ENCODE measurements at regions of chr6 and their contacts with region 1.

Region 1: GRCh38 chr6:21593412-21593926 is at the start of gene SOX4:
- DNase-seq: peak; percentile 98
- ATAC-seq: peak; percentile 65
- H3K4me3 ChIP-seq: peak within 1 kb of the TSS; percentile 99
- H3K27ac ChIP-seq: peak within 1 kb of the TSS; percentile 69
- H3K4me1 ChIP-seq: peaks cover 26% of the 10 kb centered on the region
- H3K27me3 ChIP-seq: no peaks in the 10 kb centered on the region
- CTCF ChIP-seq: no peak
- total RNA-seq, gene SOX4: 46.1 and 62.8 TPM in 2 replicates

Region 2: GRCh38 chr6:20877008-20877937 is 716.2 kb before region 1 on chr6:
- CTCF ChIA-PET with region 1: interaction called, 7 read pairs
- POLR2A ChIA-PET with region 1: interaction called, 4 read pairs
- intact Hi-C with region 1: loop called (anchors 1 kb)
- DNase-seq: peak; percentile 98
- ATAC-seq: peak; percentile 96
- H3K4me3 ChIP-seq: peak overlapping the region; percentile 8; the same call in 1 of the 2 replicates
- H3K27ac ChIP-seq: peak overlapping the region; percentile 88
- H3K4me1 ChIP-seq: peaks cover 45% of the 10 kb centered on the region
- H3K27me3 ChIP-seq: no peaks in the 10 kb centered on the region
- CTCF ChIP-seq: no peak

Region 3: DNA sequence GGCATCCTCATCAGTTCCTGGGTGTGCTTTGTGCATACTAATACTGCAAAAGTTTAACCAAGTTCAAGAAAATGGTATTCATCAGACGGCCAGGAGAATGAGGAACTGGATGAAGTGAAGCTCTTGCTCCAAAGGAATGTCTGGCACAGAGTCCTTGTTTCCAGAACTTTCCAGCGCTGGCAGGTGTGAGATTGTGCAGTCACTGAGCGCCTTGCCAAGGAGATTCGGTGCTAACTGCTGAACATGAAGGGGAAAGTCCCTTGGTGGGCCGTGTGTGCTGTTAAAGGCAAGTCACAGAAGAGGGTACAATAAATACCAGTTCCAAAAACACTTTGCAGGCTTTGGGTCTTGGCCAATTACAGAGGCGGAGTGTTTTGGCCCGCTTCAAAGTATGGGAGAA is 262.2 kb before region 1 on chr6:
- CTCF ChIA-PET with region 1: interaction called, 5 read pairs
- POLR2A ChIA-PET with region 1: interaction called, 3 read pairs
- intact Hi-C with region 1: loop called (anchors 5 kb)
- DNase-seq: no peak
- ATAC-seq: no peak
- H3K4me3 ChIP-seq: no peak overlapping the region
- H3K27ac ChIP-seq: no peak overlapping the region
- H3K4me1 ChIP-seq: peaks cover 5% of the 10 kb centered on the region; the same call in 1 of the 2 replicates
- H3K27me3 ChIP-seq: no peaks in the 10 kb centered on the region
- CTCF ChIP-seq: no peak

Region 4: DNA sequence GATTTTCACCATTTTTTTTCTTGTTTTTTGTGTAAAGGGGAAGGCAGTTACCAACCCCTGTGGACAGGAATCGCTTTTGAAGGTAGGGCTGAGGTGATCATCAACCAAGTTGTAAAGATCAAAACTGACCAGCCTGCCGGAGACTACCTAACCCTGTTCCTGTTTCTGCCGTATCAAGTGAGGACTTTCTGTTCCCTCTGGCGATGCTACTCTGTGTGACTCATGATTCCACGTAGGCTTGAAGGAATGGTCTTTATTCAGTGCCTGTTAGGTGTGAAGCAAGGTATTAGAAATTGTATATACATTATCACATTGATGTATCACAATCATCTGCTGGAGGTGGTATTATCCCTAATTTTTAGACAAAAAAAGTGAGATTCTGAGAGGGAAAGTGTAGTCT is 161.4 kb after region 1 on chr6:
- CTCF ChIA-PET with region 1: interaction called, 4 read pairs
- POLR2A ChIA-PET with region 1: interaction called, 17 read pairs
- intact Hi-C with region 1: no loop called
- DNase-seq: peak; percentile 89
- ATAC-seq: peak; percentile 68
- H3K4me3 ChIP-seq: no peak overlapping the region
- H3K27ac ChIP-seq: peak overlapping the region; percentile 40
- H3K4me1 ChIP-seq: peaks cover 44% of the 10 kb centered on the region
- H3K27me3 ChIP-seq: no peaks in the 10 kb centered on the region
- CTCF ChIP-seq: no peak

Region 5: GRCh38 chr6:22113026-22113766 is 519.7 kb after region 1 on chr6:
- CTCF ChIA-PET with region 1: no interaction called
- POLR2A ChIA-PET with region 1: interaction called, 23 read pairs
- intact Hi-C with region 1: loop called (anchors 5 kb)
- DNase-seq: peak; percentile 98
- ATAC-seq: peak; percentile 98
- H3K4me3 ChIP-seq: no peak overlapping the region
- H3K27ac ChIP-seq: peak overlapping the region; percentile 99
- H3K4me1 ChIP-seq: peaks cover 20% of the 10 kb centered on the region
- H3K27me3 ChIP-seq: no peaks in the 10 kb centered on the region
- CTCF ChIP-seq: no peak

Region 6: DNA sequence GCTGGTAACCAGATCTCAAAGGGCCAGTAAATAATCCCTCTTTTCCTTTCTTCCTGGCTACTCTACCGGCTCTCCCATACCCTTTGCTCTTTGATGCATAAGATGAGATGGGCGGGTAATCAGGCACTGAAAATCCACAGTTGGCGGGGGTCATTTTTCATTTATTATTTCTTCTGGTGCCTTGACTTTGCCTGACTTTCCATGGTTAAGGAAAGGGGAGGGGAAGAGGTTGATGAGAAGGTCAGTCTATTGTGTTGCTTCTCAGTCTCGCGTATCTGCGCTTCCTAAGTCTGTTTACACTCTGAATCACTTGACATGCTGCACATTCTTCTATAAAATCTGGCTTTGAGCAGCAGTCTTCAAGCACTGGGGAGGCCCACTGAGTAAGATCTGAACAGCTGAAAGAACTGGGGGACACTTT is 854.8 kb after region 1 on chr6:
- CTCF ChIA-PET with region 1: no interaction called
- POLR2A ChIA-PET with region 1: no interaction called
- intact Hi-C with region 1: loop called (anchors 10 kb)
- DNase-seq: peak; percentile 86
- ATAC-seq: peak; percentile 87
- H3K4me3 ChIP-seq: no peak overlapping the region
- H3K27ac ChIP-seq: peak overlapping the region; percentile 44
- H3K4me1 ChIP-seq: peaks cover 49% of the 10 kb centered on the region
- H3K27me3 ChIP-seq: no peaks in the 10 kb centered on the region
- CTCF ChIP-seq: no peak

Region 7: DNA sequence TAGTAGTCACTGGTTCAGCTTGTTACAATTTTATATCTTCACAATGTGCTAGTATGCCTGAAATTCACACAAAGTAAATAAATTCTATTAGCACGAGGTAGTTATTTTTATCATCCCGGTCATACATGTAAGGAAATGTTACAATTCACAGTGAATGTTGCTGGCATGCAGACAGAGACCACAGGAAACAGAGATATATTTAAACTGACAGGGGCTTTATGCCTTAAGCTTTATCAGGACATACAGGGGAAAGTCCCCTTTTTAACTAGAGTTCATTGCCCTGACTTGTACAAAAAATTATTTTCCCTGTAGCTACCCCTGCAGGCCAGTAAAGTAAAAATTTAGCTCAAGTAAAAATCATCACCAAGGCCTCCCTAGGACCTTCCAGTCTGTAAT is 1820.6 kb after region 1 on chr6:
- CTCF ChIA-PET with region 1: no interaction called
- POLR2A ChIA-PET with region 1: no interaction called
- intact Hi-C with region 1: loop called (anchors 10 kb)
- DNase-seq: peak; percentile 70
- ATAC-seq: peak; percentile 92
- H3K4me3 ChIP-seq: no peak overlapping the region
- H3K27ac ChIP-seq: peak overlapping the region; percentile 54
- H3K4me1 ChIP-seq: peaks cover 18% of the 10 kb centered on the region
- H3K27me3 ChIP-seq: no peaks in the 10 kb centered on the region
- CTCF ChIP-seq: peak; percentile 66

Measured in PC-3 (cell line).